ENCODE measurements at regions of chr17 and their contacts with region 1.

Region 1: GRCh38 chr17:76940738-76941350 is 72.6 kb downstream of the MGAT5B start:
- DNase-seq: peak; percentile 43
- ATAC-seq: peak; percentile 54; the same call in 1 of the 2 replicates
- H3K4me3 ChIP-seq: no peak overlapping the region
- H3K27ac ChIP-seq: no peak overlapping the region
- H3K4me1 ChIP-seq: no peaks in the 10 kb centered on the region
- H3K27me3 ChIP-seq: no peaks in the 10 kb centered on the region
- CTCF ChIP-seq: peak; percentile 60

Region 2: GRCh38 chr17:76868176-76868668 is 72.6 kb before region 1 on chr17 and contains the start of gene MGAT5B:
- CTCF ChIA-PET with region 1: interaction called, 4 read pairs
- POLR2A ChIA-PET with region 1: no interaction called
- intact Hi-C with region 1: loop called (anchors 5 kb)
- DNase-seq: peak; percentile 96
- ATAC-seq: peak; percentile 76
- H3K4me3 ChIP-seq: peak within 1 kb of the TSS; percentile 65
- H3K27ac ChIP-seq: peak within 1 kb of the TSS; percentile 33
- H3K4me1 ChIP-seq: peaks cover 46% of the 10 kb centered on the region
- H3K27me3 ChIP-seq: no peaks in the 10 kb centered on the region
- CTCF ChIP-seq: peak; percentile 82
- total RNA-seq, gene MGAT5B: 4.9 and 10.3 TPM in 2 replicates

Measured in PC-3 (cell line).